GM12878 (cell line): ENCODE measurements at regions of chr14 and their contacts with region 1.

Region 1: GRCh38 chr14:71403656-71404055 is 496.4 kb downstream of the PCNX1 start:
- DNase-seq: peak; percentile 42
- ATAC-seq: peak; percentile 71
- H3K4me3 ChIP-seq: no peak overlapping the region
- H3K27ac ChIP-seq: no peak overlapping the region
- H3K4me1 ChIP-seq: peaks cover 26% of the 10 kb centered on the region
- H3K27me3 ChIP-seq: no peaks in the 10 kb centered on the region
- CTCF ChIP-seq: peak; percentile 7 to 22 (median 10); a peak in 2 of 6 replicates
- EP300 ChIP-seq: no peak
- POLR2A ChIP-seq: no peak
- RAD21 ChIP-seq: peak; percentile 54

Region 2: GRCh38 chr14:71138448-71139293 is 265.0 kb before region 1 on chr14:
- CTCF ChIA-PET with region 1: interaction called, 10 read pairs
- POLR2A ChIA-PET with region 1: no interaction called
- RAD21 ChIA-PET with region 1: interaction called, 6 read pairs
- SMC1A ChIA-PET with region 1: interaction called, 4 read pairs
- in situ Hi-C with region 1: loop called (anchors 10 kb)
- intact Hi-C with region 1: loop called (anchors 5 kb)
- DNase-seq: peak; percentile 9
- ATAC-seq: peak; percentile 85
- H3K4me3 ChIP-seq: no peak overlapping the region
- H3K27ac ChIP-seq: no peak overlapping the region
- H3K4me1 ChIP-seq: peaks cover 17% of the 10 kb centered on the region
- H3K27me3 ChIP-seq: no peaks in the 10 kb centered on the region
- CTCF ChIP-seq: peak; percentile 87 to 90 (median 88)
- EP300 ChIP-seq: no peak
- POLR2A ChIP-seq: no peak
- RAD21 ChIP-seq: peak; percentile 99

Region 3: DNA sequence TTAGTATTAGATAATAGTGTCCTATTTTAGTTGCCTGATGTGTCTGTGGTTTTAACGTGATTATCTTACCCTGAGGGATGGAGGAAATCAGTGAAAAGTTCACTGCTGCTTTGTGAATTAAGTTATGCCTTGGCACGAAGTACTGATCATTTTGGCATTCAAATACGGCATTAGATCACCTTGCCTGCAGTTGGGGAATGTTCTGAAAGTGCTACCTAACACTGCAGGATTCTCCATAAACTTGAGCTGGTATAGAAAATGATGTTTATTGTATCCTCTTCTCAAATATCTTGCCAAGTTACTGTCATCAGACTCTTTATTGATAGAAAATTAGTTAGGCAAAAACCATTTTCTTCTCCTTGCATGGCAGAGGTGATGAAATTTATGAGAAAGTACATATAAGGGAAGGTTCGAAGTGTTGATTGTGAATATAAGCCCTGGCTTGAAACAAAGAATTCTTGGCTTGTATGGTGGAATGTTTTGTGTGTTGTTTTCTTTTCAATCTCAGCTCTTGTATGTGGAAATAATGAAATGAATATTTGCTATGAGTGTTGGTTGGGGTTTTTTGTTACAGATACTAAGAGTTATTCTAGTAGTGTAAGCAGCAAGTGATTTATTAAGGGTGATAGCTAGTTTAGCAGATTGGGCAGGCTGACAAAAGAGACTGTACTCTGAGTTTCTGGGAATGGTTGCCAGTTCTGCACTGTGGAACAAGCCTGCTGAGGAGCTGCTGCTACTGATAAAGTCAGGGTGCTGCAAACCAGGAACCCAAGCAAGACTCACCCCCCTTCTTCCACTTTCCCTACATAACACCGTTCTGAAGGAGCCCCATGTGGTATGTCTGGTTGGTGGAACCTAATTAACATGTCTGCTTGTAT is 48.1 kb before region 1 on chr14:
- CTCF ChIA-PET with region 1: interaction called, 10 read pairs
- POLR2A ChIA-PET with region 1: interaction called, 4 read pairs
- RAD21 ChIA-PET with region 1: interaction called, 14 read pairs
- SMC1A ChIA-PET with region 1: interaction called, 24 read pairs
- in situ Hi-C with region 1: no loop called
- intact Hi-C with region 1: loop called (anchors 5 kb)
- DNase-seq: no peak
- ATAC-seq: peak; percentile 45
- H3K4me3 ChIP-seq: peak overlapping the region; percentile 20; the same call in 1 of the 2 replicates
- H3K27ac ChIP-seq: peak overlapping the region; percentile 52
- H3K4me1 ChIP-seq: peaks cover 38% of the 10 kb centered on the region
- H3K27me3 ChIP-seq: no peaks in the 10 kb centered on the region
- CTCF ChIP-seq: no peak
- EP300 ChIP-seq: no peak
- POLR2A ChIP-seq: no peak
- RAD21 ChIP-seq: no peak

Region 4: GRCh38 chr14:71384007-71384845 is 19.4 kb before region 1 on chr14:
- CTCF ChIA-PET with region 1: interaction called, 3 read pairs
- POLR2A ChIA-PET with region 1: interaction called, 4 read pairs
- RAD21 ChIA-PET with region 1: interaction called, 8 read pairs
- SMC1A ChIA-PET with region 1: interaction called, 12 read pairs
- in situ Hi-C with region 1: no loop called
- intact Hi-C with region 1: no loop called
- DNase-seq: no peak
- ATAC-seq: no peak
- H3K4me3 ChIP-seq: no peak overlapping the region
- H3K27ac ChIP-seq: no peak overlapping the region
- H3K4me1 ChIP-seq: no peaks in the 10 kb centered on the region
- H3K27me3 ChIP-seq: no peaks in the 10 kb centered on the region
- CTCF ChIP-seq: no peak
- EP300 ChIP-seq: no peak
- POLR2A ChIP-seq: no peak
- RAD21 ChIP-seq: no peak

Region 5: DNA sequence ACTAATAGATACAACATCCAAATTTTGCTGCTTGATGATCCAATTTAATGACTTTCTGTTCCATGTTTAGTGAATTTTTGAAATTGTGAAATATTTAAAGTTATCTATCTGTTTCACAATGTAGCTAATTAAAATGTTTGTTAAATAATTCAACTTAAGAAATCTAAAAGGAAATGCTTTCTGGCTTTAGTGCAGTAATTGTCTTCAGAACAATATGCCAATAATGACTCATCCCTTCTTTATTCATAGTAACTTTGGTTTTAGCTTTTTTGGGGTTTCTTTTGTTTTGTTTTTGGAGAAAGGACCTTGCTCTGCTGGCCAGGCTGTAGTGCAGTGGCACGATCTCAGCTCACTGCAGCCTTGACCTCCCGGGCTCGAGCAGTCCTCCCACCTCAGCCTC is 49.3 kb after region 1 on chr14:
- CTCF ChIA-PET with region 1: interaction called, 3 read pairs
- POLR2A ChIA-PET with region 1: interaction called, 6 read pairs
- RAD21 ChIA-PET with region 1: interaction called, 3 read pairs
- SMC1A ChIA-PET with region 1: interaction called, 10 read pairs
- in situ Hi-C with region 1: no loop called
- intact Hi-C with region 1: no loop called
- DNase-seq: no peak
- ATAC-seq: peak; percentile 36
- H3K4me3 ChIP-seq: no peak overlapping the region
- H3K27ac ChIP-seq: no peak overlapping the region
- H3K4me1 ChIP-seq: no peaks in the 10 kb centered on the region
- H3K27me3 ChIP-seq: no peaks in the 10 kb centered on the region
- CTCF ChIP-seq: no peak
- EP300 ChIP-seq: no peak
- POLR2A ChIP-seq: no peak
- RAD21 ChIP-seq: no peak

Region 6: GRCh38 chr14:71497645-71498086 is 94.0 kb after region 1 on chr14:
- CTCF ChIA-PET with region 1: interaction called, 4 read pairs
- POLR2A ChIA-PET with region 1: no interaction called
- RAD21 ChIA-PET with region 1: interaction called, 16 read pairs
- SMC1A ChIA-PET with region 1: interaction called, 13 read pairs
- in situ Hi-C with region 1: no loop called
- intact Hi-C with region 1: loop called (anchors 5 kb)
- DNase-seq: peak; percentile 98
- ATAC-seq: peak; percentile 91
- H3K4me3 ChIP-seq: no peak overlapping the region
- H3K27ac ChIP-seq: peak overlapping the region; percentile 94
- H3K4me1 ChIP-seq: peaks cover 43% of the 10 kb centered on the region
- H3K27me3 ChIP-seq: no peaks in the 10 kb centered on the region
- CTCF ChIP-seq: no peak
- EP300 ChIP-seq: peak; percentile 99
- POLR2A ChIP-seq: no peak
- RAD21 ChIP-seq: no peak; the same call in none of the 2 replicates